Panc1 (cell line): ENCODE measurements at regions of chr1 and their contacts with region 1.

Region 1: GRCh38 chr1:157878059-157878458 is 36.5 kb upstream of the CD5L start:
- DNase-seq: peak; percentile 18
- ATAC-seq: peak; percentile 88
- H3K4me3 ChIP-seq: no peak overlapping the region
- H3K27ac ChIP-seq: no peak overlapping the region
- H3K4me1 ChIP-seq: no peaks in the 10 kb centered on the region
- H3K27me3 ChIP-seq: peaks cover 2% of the 10 kb centered on the region
- CTCF ChIP-seq: peak; percentile 63

Region 2: DNA sequence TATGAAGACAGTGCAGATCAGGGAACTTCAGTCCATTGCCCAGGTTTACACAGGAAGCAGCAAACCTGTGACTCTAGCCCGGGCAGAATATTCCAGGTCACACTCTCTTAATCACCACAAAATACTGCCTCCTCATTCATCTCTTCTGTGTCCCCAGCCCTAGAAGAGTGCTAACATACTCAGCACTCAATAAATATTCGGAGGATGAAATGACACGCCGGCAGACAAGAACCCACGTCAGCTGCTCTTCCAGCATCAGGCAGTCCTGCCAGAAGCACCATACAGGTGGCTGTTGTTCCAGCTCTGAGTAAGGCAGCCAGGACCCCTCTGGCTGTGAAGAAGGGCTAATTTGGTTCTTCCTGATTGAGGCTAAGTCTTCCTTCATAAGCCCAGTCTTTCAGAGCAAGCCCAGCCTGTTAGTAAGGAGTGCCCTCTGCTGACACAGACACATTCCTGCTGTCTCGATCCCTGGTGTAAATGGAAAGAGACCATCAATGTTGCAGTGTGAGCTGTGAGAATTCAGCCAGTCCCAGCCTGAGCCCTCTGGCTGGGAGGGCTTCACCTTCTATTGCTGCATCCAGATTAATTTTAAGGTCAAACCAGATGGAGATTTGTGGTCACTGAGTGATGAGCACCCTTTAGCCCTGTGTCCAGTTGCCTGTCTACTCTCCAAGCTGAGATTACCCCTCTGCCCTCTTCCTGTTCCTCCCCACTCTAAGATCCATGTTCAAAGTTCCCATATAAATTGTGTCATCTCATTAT is 70.4 kb after region 1 on chr1:
- CTCF ChIA-PET with region 1: interaction called, 4 read pairs
- POLR2A ChIA-PET with region 1: no interaction called
- in situ Hi-C with region 1: no loop called
- intact Hi-C with region 1: loop called (anchors 1 kb)
- DNase-seq: no peak
- ATAC-seq: peak; percentile 94
- H3K4me3 ChIP-seq: no peak overlapping the region
- H3K27ac ChIP-seq: no peak overlapping the region
- H3K4me1 ChIP-seq: no peaks in the 10 kb centered on the region
- H3K27me3 ChIP-seq: peaks cover 7% of the 10 kb centered on the region
- CTCF ChIP-seq: peak; percentile 82